ENCODE measurements at regions of chr3 and their contacts with region 1.

Region 1: DNA sequence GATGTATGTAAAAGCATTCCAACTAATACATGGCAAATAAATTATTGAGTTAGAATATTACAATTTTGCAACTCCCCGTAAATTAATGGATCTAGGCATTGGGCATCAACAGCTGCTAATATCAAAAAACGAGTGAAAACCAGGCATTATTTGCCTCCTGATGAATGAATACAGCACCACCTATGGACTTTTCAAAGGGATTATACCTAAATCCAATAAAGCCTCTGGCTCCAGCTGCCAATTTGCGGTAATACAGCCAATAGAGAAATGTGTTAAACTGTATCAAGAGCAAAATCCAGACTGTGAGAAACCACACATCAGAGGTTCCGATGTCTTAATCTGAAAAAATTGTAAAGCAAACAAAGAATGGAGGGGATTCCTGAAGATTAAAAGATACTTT is 16.3 kb upstream of the A4GNT start:
- DNase-seq: no peak
- ATAC-seq: no peak
- H3K4me3 ChIP-seq: no peak overlapping the region
- H3K27ac ChIP-seq: no peak overlapping the region
- H3K4me1 ChIP-seq: no peaks in the 10 kb centered on the region
- H3K27me3 ChIP-seq: peaks cover 1% of the 10 kb centered on the region; the same call in 1 of the 2 replicates
- CTCF ChIP-seq: no peak
- POLR2A ChIP-seq: no peak
- RAD21 ChIP-seq: no peak

Region 2: DNA sequence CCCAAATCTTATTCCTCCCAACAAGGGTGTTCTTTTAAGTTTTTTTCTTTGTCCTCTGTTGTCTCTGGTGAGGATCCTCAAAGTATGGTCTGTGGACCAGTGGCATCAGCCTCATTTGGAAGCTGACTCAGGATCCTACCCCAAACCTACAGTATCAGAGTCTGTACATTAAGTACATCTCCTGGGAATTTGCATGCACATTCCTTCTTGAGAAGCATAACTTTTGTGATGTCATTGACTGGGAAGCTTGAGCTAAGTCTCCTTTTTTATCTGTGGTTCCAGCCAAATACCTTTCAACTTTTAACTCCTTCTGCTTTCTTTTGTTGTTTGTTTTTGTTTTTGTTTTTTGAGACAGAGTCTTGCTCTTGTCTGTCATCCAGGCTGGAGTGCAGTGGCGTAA is 79.1 kb after region 1 on chr3:
- CTCF ChIA-PET with region 1: no interaction called
- POLR2A ChIA-PET with region 1: interaction called, 11 read pairs
- dilution Hi-C with region 1: no loop called
- in situ Hi-C with region 1: no loop called
- intact Hi-C with region 1: no loop called
- DNase-seq: peak; percentile 81
- ATAC-seq: peak; percentile 57
- H3K4me3 ChIP-seq: no peak overlapping the region
- H3K27ac ChIP-seq: no peak overlapping the region
- H3K4me1 ChIP-seq: no peaks in the 10 kb centered on the region; the same call in 1 of the 2 replicates
- H3K27me3 ChIP-seq: no peaks in the 10 kb centered on the region
- CTCF ChIP-seq: no peak
- POLR2A ChIP-seq: no peak
- RAD21 ChIP-seq: no peak

Region 3: DNA sequence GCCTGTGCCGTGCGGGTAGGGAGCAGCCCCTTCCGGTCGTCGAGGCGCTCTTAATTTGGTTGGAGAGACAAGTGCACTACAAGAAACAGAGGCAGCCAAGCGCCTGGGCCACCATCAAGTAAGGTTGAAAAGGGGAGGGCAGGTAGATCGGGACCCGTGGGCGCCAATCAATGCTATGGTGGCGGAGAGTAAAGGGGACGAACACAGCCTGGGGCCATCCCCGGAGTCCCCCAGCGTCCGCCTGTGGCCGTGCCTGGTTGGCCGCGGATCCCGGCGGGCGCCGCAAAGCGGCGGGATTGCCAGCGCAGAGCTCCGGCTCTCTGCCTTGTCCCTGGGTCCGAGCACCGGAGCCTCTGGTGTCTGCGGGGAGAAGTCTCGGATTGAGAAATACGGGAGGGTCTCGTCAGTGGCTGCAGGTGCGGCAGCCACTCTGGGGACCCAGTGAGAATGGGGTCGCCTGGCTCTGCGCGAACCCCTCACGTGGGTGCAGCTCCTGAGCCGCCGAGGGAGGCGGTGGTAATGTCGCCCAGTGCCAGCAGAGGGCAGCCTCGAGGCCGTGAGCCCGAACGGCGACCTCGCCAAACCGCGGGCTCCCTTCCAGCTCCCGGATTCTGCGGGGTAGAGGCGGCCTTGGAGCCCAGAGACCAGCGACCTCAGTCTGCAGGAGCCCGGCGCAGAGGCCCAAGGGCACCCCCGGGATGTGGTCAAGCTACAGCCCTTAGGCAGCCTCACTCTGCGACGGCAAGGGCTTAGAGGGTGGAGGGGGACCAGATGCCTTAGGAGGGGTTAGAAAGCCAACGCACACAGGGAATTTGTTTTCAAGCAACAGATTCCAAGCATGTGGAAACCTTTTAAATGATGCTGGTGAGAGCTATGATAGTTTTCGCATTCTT is 787.6 kb after region 1 on chr3:
- CTCF ChIA-PET with region 1: no interaction called
- POLR2A ChIA-PET with region 1: no interaction called
- dilution Hi-C with region 1: no loop called
- in situ Hi-C with region 1: no loop called
- intact Hi-C with region 1: no loop called
- DNase-seq: peak; percentile 29
- ATAC-seq: peak; percentile 93
- H3K4me3 ChIP-seq: peak overlapping the region; percentile 41
- H3K27ac ChIP-seq: no peak overlapping the region
- H3K4me1 ChIP-seq: peaks cover 4% of the 10 kb centered on the region; the same call in 1 of the 2 replicates
- H3K27me3 ChIP-seq: peaks cover 79% of the 10 kb centered on the region
- CTCF ChIP-seq: peak; percentile 74
- POLR2A ChIP-seq: no peak
- RAD21 ChIP-seq: peak; percentile 55

Measured in IMR-90 (cell line).